MCF 10A (cell line): ENCODE measurements at regions of chr16 and their contacts with region 1.

Region 1: DNA sequence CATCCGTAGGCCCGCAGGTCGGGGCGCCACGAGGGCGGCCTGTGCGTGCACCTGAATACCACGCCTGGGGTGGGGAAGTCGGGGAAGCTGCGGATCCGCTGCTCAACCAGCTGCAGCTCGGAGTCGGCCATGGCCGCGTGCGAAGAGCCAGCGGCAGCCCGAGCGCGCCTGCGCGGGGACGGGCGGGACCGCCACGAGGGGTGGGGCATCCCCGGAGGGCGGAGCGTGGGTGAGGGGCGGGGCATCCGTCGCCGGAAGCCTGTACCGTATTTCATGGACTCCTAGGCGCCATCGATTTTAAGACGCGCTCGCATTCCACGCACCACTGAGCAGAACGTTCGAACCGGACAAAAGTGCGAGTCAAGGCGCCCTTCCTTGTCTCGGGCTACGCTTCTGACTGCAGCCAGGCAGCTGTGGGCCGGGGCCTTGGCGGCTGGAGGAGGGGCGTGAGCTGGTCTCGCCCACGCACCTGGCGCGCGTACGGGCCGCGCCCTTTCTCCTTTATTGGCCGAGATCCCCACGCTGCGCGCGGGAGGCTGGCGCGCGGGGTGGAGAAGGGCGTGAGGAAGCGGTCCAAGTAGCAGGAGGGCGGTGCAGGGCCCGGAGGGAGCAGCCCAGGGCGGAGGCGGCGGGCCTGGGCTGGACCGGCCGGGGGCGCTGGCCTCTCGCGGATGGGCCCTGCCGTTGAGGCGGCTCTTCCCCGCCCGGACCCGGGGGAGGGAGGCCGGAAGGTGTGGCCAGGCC is at the start of gene APRT:
- DNase-seq: peak; percentile 89
- H3K4me3 Mint-ChIP-seq: peak within 1 kb of the TSS; percentile 76
- H3K27ac Mint-ChIP-seq: peak within 1 kb of the TSS; percentile 77
- H3K4me1 Mint-ChIP-seq: peaks cover 5% of the 10 kb centered on the region
- H3K27me3 Mint-ChIP-seq: no peaks in the 10 kb centered on the region
- CTCF ChIP-seq: peak; percentile 18
- total RNA-seq, gene APRT: 231 and 248 TPM in 2 replicates

Region 2: DNA sequence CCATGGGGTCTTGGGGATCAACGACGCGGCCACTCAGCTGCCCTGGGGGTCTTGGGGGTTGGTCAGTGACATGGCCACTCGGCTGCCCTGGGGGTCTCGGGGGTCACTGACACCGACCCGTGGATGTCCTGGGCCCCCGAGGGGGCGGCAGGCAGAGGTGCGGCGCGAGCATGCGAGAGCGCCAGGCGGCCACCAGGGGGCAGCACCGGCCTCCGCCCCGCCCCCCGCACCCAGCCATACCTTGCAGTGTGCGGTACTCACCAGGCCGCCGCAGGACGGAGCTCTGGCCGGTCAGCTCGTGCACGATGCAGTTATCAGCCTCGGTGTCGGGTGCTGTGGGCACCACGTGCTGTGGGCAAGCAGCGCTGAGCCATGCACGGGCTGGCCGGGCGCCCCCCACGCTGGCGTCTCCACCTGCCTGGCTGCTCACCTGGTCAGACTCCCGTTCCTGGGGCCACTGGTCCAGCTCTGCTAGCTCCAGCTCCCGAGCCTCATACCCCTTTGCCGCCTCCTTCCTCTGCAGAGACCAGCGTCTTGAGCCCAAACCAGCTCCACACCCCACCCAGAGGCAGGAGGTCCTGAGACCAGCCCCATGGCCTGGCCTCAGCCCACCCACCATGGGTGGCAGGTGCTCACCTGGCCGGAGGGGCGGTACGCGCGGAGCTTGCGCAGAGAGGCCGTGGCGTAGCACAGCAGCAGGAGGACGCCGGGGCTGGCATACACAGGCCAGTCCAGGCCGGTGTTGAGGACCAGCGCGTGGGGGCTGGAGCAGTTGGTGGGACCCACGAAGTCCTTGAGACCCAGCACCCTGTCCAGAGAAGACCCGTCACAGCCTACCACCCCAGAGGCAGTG is 74.4 kb before region 1 on chr16:
- CTCF ChIA-PET with region 1: interaction called, 11 read pairs
- POLR2A ChIA-PET with region 1: interaction called, 5 read pairs
- intact Hi-C with region 1: no loop called
- DNase-seq: peak; percentile 76
- H3K4me3 Mint-ChIP-seq: no peak overlapping the region
- H3K27ac Mint-ChIP-seq: no peak overlapping the region
- H3K4me1 Mint-ChIP-seq: no peaks in the 10 kb centered on the region
- H3K27me3 Mint-ChIP-seq: no peaks in the 10 kb centered on the region
- CTCF ChIP-seq: peak; percentile 93

Region 3: DNA sequence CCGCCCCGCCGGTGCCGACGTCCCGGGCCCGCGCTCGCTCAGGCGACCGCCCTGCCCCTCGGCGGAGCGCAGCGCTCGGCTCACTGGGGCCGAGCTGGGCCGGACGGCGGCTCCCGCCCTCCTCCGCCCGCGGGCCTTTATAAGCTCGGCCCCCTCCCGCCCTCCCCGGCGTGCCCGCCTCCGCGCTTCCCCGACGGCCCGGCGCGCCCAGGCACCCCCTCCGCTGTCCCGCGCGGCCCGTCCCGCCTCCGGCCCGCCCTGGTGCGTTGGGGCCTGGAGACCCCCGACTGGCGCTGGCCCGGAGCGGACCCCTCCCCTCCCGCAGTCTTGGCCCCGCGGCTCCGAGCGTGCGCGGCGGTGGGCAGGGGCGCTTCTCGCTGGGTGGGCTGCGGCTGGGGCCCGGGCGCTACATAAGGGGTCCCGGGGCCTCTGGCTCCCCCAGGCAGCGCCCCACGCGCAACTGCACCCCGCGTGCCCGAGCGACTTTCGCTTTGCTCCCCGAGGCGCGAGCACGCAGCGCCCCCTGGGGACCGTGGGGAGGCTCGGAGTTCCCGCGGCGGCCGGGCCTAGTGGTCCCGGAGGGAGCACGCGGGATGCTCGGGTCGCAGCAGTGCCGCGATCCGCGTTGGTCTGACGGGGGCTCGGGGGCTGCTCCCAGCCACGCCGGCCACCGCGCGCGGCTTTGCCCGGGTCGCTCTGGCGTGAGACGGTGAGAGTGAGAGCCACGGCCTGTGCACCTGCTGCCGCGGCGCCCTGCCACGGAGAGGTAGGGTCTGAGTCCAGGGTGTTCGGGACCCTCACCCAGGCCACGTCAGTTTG is 26.6 kb before region 1 on chr16 and contains the start of gene PIEZO1:
- CTCF ChIA-PET with region 1: interaction called, 4 read pairs
- POLR2A ChIA-PET with region 1: interaction called, 12 read pairs
- intact Hi-C with region 1: no loop called
- DNase-seq: peak; percentile 55
- H3K4me3 Mint-ChIP-seq: peak within 1 kb of the TSS; percentile 68
- H3K27ac Mint-ChIP-seq: peak within 1 kb of the TSS; percentile 83
- H3K4me1 Mint-ChIP-seq: peaks cover 25% of the 10 kb centered on the region
- H3K27me3 Mint-ChIP-seq: no peaks in the 10 kb centered on the region
- CTCF ChIP-seq: peak; percentile 92
- total RNA-seq, gene PIEZO1: 193 and 195 TPM in 2 replicates

Region 4: DNA sequence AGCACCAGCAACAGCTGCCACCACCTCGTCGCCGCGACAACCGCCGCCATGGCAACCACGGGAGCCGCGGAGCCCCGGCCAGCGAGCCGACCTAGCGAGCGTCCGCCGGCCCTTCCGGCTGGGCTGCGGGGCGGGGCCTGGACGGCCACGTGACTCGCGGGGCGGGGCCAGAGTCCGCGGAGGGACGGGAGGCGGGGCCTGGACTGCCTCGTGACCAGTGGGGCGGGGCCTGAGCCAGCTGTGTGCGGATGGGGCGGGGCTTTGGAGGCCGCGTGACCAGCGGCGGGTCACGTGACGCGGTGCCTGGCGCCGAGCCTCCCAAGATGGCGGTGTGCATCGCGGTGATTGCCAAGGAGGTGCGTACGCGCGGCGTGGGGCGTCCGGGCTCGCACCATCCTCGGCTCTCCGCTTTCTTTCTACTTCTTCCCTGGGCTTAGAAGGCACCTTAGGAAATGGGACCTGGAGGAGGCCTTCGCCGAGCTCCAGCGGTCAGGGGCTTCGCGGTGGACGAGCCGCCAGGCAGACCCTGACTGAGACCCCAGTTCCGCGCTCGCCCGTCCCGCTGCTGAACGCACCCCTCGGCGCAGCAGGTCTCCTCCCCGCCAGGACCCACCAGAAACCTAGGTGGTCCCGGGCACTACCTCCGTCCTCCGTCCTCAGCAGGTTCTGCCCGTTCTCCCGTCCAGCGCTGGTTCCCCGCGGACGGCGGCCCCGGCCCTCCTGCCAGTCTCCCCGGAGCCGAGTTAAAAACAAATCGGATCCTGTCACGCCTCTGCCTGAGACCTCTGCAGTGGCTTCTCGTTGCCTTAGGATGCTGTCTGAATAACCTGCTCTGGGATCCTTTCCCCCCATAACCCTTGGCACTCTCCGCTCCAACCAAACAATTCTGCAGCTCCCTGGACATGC is 45.1 kb after region 1 on chr16 and contains the starts of genes GALNS and TRAPPC2L:
- CTCF ChIA-PET with region 1: interaction called, 47 read pairs
- POLR2A ChIA-PET with region 1: interaction called, 42 read pairs
- intact Hi-C with region 1: loop called (anchors 1 kb)
- DNase-seq: peak; percentile 94
- H3K4me3 Mint-ChIP-seq: peak within 1 kb of the TSS; percentile 83
- H3K27ac Mint-ChIP-seq: peak within 1 kb of the TSS; percentile 49
- H3K4me1 Mint-ChIP-seq: peaks cover 18% of the 10 kb centered on the region
- H3K27me3 Mint-ChIP-seq: no peaks in the 10 kb centered on the region
- CTCF ChIP-seq: no peak
- total RNA-seq, gene GALNS: 26.0 and 31.6 TPM in 2 replicates
- total RNA-seq, gene TRAPPC2L: 35.6 and 42.6 TPM in 2 replicates

Region 5: GRCh38 chr16:89217388-89218191 is 405.6 kb after region 1 on chr16 and contains the start of gene ZNF778:
- CTCF ChIA-PET with region 1: interaction called, 4 read pairs
- POLR2A ChIA-PET with region 1: interaction called, 13 read pairs
- intact Hi-C with region 1: loop called (anchors 1 kb)
- DNase-seq: peak; percentile 78
- H3K4me3 Mint-ChIP-seq: peak within 1 kb of the TSS; percentile 88
- H3K27ac Mint-ChIP-seq: peak within 1 kb of the TSS; percentile 47
- H3K4me1 Mint-ChIP-seq: peaks cover 6% of the 10 kb centered on the region
- H3K27me3 Mint-ChIP-seq: no peaks in the 10 kb centered on the region
- CTCF ChIP-seq: no peak
- total RNA-seq, gene ZNF778: 13.5 and 15.8 TPM in 2 replicates